Natural killer cell (primary cell): ENCODE measurements at regions of chr7 and their contacts with region 1.

Region 1: DNA sequence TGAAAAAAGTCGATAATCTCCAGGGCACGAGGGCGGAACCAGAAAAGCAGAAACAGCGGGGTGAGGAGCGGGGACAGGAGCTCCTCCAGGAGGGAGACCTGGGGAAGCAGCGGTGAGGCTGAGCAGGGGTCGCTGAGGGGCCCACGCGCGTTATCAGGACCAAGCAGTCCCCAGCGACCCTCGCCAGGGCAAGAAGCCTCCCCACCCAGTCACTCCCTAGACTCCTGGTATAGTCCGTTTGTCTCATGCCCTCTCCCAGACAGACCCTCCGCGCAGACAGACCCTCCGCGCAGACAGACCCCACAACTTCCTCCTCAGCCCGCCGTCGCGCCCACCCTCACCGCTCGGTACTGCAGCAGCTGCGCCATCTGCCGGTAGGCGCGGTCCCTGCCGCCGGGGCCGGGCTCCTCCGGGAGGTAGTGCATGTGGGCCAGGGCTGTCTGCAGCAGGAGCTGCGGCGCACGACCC is 6.3 kb downstream of the ATG9B start:
- DNase-seq: peak; percentile 76 to 87
- ATAC-seq: peak; percentile 56 to 61 (median 59)
- H3K4me3 ChIP-seq: peak overlapping the region; percentile 23
- H3K4me3 Mint-ChIP-seq: peak overlapping the region; percentile 87
- H3K27ac ChIP-seq: no peak overlapping the region
- H3K27ac Mint-ChIP-seq: peak overlapping the region; percentile 18 to 77
- H3K4me1 ChIP-seq: peaks cover 46% of the 10 kb centered on the region
- H3K4me1 Mint-ChIP-seq: peaks cover 38 to 54% of the 10 kb centered on the region in 2 donors
- H3K27me3 ChIP-seq: peaks cover 19% of the 10 kb centered on the region
- H3K27me3 Mint-ChIP-seq: peaks cover 0 to 41% of the 10 kb centered on the region in 2 donors
- CTCF ChIP-seq: peak; percentile 95

Region 2: GRCh38 chr7:150962553-150963399 is 55.2 kb before region 1 on chr7:
- intact Hi-C with region 1: loop called (anchors 5 kb)
- DNase-seq: peak; percentile 48 to 81
- ATAC-seq: peak; percentile 66 to 98 (median 94)
- H3K4me3 ChIP-seq: no peak overlapping the region
- H3K4me3 Mint-ChIP-seq: no peak overlapping the region
- H3K27ac ChIP-seq: no peak overlapping the region
- H3K27ac Mint-ChIP-seq: no peak overlapping the region
- H3K4me1 ChIP-seq: peaks cover 4% of the 10 kb centered on the region
- H3K4me1 Mint-ChIP-seq: peaks cover 0 to 9% of the 10 kb centered on the region in 2 donors
- H3K27me3 ChIP-seq: peaks cover 9% of the 10 kb centered on the region
- H3K27me3 Mint-ChIP-seq: peaks cover 39 to 42% of the 10 kb centered on the region in 2 donors
- CTCF ChIP-seq: peak; percentile 72

Region 3: GRCh38 chr7:150974468-150975391 is 43.3 kb before region 1 on chr7:
- intact Hi-C with region 1: loop called (anchors 5 kb)
- DNase-seq: peak; percentile 52 to 91
- ATAC-seq: peak; percentile 74 to 80 (median 74)
- H3K4me3 ChIP-seq: peak overlapping the region; percentile 42
- H3K4me3 Mint-ChIP-seq: peak overlapping the region; percentile 85
- H3K27ac ChIP-seq: no peak overlapping the region
- H3K27ac Mint-ChIP-seq: peak overlapping the region in 1 of 2 donors; percentile 70
- H3K4me1 ChIP-seq: peaks cover 36% of the 10 kb centered on the region
- H3K4me1 Mint-ChIP-seq: peaks cover 20 to 34% of the 10 kb centered on the region in 2 donors
- H3K27me3 ChIP-seq: peaks cover 30% of the 10 kb centered on the region
- H3K27me3 Mint-ChIP-seq: peaks cover 22 to 24% of the 10 kb centered on the region in 2 donors
- CTCF ChIP-seq: no peak